PC-9 (cell line): ENCODE measurements at regions of chr16 and their contacts with region 1.

Region 1: DNA sequence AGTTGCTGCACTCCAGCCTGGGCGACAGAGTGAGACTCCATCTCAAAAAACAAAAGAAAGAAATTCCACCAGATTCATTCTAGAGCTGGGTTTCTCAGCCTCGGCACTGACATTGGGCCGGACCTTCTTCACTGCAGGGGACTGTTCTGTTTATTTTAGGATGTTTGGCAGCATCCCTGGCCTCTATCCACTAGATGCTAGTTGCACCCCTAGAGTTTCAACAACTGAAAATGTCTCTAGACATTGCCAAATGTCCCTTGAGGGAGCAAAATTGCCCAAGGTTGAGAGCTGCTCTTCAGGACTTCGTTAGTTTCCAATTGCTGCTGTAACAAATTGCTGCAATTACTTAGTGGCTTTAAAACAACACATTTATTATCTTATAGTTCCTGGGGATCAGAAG is 7.2 kb downstream of the EEF2K start:
- DNase-seq: no peak
- H3K4me3 ChIP-seq: no peak overlapping the region
- H3K27ac ChIP-seq: no peak overlapping the region
- H3K4me1 ChIP-seq: 0 out of 2 replicates have a peak, but pooled peaks cover under 1% of the 10 kb centered on the region
- H3K27me3 ChIP-seq: no peaks in the 10 kb centered on the region
- CTCF ChIP-seq: no peak

Region 2: GRCh38 chr16:22123146-22123545 is 90.1 kb before region 1 on chr16:
- CTCF ChIA-PET with region 1: no interaction called
- POLR2A ChIA-PET with region 1: no interaction called
- intact Hi-C with region 1: no loop called
- DNase-seq: peak in 1 of 2 experiments; percentile 40
- H3K4me3 ChIP-seq: no peak overlapping the region
- H3K27ac ChIP-seq: no peak overlapping the region
- H3K4me1 ChIP-seq: no peaks in the 10 kb centered on the region
- H3K27me3 ChIP-seq: peaks cover 6% of the 10 kb centered on the region; the same call in 1 of the 2 replicates
- CTCF ChIP-seq: peak; percentile 35; the same call in 1 of the 2 replicates

Region 3: DNA sequence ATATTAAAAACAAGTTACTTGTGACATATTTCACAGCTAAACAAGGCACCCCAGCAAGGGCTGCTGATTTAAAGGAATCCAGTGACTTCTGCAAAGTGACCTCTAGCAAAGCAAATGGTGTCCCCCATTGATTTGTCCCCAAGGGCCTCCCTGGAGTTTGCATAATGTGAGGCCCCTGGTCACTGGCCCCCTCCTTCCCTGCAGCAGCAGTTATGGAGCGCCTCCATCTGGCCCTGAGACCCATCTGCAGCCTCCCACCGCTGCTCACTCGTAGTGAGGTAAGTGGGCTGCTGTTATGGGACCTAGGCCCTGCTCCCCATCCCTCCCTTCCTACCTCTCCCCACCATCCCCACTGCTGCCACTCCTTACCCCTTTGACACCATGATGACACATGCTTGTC is 26.7 kb before region 1 on chr16:
- CTCF ChIA-PET with region 1: no interaction called
- POLR2A ChIA-PET with region 1: no interaction called
- intact Hi-C with region 1: no loop called
- DNase-seq: no peak
- H3K4me3 ChIP-seq: no peak overlapping the region
- H3K27ac ChIP-seq: no peak overlapping the region
- H3K4me1 ChIP-seq: peaks cover 7% of the 10 kb centered on the region
- H3K27me3 ChIP-seq: peaks cover 4% of the 10 kb centered on the region; the same call in 1 of the 2 replicates
- CTCF ChIP-seq: no peak; the same call in 1 of the 2 replicates

Region 4: DNA sequence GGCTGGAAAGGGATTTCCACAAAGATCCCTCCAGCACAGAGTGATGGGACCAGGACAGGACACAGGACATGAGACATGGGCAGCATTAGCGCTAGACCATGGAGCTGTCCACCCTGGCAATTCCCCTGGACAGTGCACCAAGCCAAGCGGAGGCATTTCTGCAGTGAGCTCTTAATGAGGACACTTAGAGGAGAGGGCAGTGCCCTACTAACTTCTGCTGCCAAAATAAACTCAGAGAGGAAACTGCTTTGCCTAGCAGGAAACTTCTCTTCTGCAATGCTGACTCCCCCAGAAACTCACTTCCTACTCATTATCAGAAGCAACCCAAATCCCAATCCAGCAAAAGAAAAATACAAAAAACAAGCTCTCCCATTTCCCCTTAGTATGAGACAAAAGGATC is 719.9 kb after region 1 on chr16:
- CTCF ChIA-PET with region 1: no interaction called
- POLR2A ChIA-PET with region 1: interaction called, 11 read pairs
- intact Hi-C with region 1: no loop called
- DNase-seq: no peak
- H3K4me3 ChIP-seq: no peak overlapping the region
- H3K27ac ChIP-seq: no peak overlapping the region
- H3K4me1 ChIP-seq: no peaks in the 10 kb centered on the region
- H3K27me3 ChIP-seq: peaks cover 56% of the 10 kb centered on the region
- CTCF ChIP-seq: no peak

Region 5: GRCh38 chr16:23072084-23072599 is 858.9 kb after region 1 on chr16:
- CTCF ChIA-PET with region 1: no interaction called
- POLR2A ChIA-PET with region 1: no interaction called
- intact Hi-C with region 1: no loop called
- DNase-seq: peak in 1 of 2 experiments; percentile 31
- H3K4me3 ChIP-seq: no peak overlapping the region
- H3K27ac ChIP-seq: no peak overlapping the region
- H3K4me1 ChIP-seq: no peaks in the 10 kb centered on the region
- H3K27me3 ChIP-seq: no peaks in the 10 kb centered on the region
- CTCF ChIP-seq: no peak